Prostate gland (tissue), 2 donors: ENCODE measurements at regions of chr7 and their contacts with region 1.

Region 1: DNA sequence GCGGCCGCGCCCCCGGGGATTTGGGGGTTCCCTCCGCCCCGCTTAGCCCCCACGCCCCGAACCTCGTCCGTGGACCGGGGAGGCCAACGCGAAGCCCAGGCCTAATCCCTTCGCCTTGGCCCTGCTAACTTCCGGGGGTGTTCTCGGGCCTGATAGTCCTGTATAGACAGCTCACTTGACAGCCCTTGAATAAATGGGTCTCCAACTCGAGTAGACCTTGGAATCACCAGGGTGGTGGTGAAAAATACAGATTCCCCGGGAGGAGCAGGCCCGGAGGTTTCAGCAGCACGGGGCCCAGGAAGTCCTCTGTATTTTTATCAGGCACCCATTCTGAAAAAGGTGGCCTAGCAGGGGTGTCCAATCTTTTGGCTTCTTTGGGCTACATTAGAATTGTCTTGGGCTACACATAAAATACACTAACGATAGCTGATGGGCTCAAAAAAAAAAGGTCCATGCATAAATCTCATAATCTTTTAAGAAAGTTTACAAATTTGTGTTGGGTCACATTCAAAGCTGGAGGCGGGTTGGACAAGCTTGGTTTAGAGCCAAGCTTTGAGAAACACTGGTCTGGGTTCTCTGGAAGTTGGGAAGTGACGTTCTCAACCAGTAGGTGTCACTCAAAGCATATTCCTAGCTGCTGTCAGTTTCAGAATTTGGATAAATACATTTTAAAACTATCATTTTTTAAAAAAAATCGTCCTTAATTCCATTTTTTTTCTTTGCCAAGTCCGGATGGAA is 221.7 kb downstream of the PHTF2 start:
- DNase-seq: peak; percentile 75
- H3K4me3 ChIP-seq: peak overlapping the region; percentile 48 to 53
- H3K27ac ChIP-seq: peak overlapping the region; percentile 95 to 96
- H3K4me1 ChIP-seq: peaks cover 2% of the 10 kb centered on the region
- H3K27me3 ChIP-seq: no peaks in the 10 kb centered on the region
- CTCF ChIP-seq: peak; percentile 53 to 80 (median 67)
- POLR2A ChIP-seq: no peak

Region 2: DNA sequence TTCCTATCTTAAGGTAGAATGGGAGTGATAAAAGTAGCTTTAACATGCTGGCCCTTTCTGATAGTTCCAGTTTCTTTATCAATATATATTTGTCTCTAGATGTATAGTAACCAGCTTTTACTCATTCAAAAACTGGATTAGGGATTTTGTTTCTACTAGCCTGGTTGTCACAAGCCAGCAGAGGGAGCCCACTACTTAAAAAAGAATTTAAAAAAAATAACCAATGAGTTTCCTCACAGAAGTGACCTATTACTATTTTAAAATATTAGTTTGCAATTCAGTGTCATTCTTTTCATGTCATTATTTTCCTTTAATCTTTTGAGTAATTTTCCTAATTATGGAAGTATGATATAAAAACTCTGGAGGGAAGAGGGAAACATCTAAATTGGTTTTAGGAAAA is 79.7 kb before region 1 on chr7:
- intact Hi-C with region 1: loop called (anchors 10 kb)
- DNase-seq: peak; percentile 12
- H3K4me3 ChIP-seq: no peak overlapping the region
- H3K27ac ChIP-seq: no peak overlapping the region
- H3K4me1 ChIP-seq: no peaks in the 10 kb centered on the region
- H3K27me3 ChIP-seq: no peaks in the 10 kb centered on the region
- CTCF ChIP-seq: peak in 3 of 4 experiments; percentile 40 to 66 (median 61)
- POLR2A ChIP-seq: no peak

Region 3: DNA sequence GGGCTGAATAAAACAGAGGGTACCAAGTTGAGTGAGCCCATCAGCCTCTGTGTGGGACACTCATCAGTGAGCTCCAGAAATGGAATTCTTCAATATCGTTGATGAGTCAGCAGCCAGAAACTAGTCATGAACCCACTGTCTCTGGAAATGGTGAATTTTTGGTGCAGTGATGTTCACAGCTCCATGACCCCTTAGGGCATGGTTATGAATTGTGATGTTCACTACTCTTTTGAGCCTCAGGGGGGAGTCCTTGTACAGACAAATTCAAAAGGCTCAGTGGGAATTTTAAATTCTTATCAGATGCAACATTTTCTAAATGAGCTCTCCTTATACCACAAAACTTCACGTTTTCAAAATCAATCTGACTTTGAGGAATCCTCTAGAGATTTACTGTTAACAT is 114.0 kb after region 1 on chr7:
- intact Hi-C with region 1: loop called (anchors 10 kb)
- DNase-seq: no peak
- H3K4me3 ChIP-seq: no peak overlapping the region
- H3K27ac ChIP-seq: no peak overlapping the region
- H3K4me1 ChIP-seq: no peaks in the 10 kb centered on the region
- H3K27me3 ChIP-seq: no peaks in the 10 kb centered on the region
- CTCF ChIP-seq: peak in 2 of 4 experiments; percentile 27 to 47
- POLR2A ChIP-seq: no peak

Region 4: GRCh38 chr7:78226059-78226719 is 205.9 kb after region 1 on chr7:
- intact Hi-C with region 1: loop called (anchors 10 kb)
- DNase-seq: no peak
- H3K4me3 ChIP-seq: no peak overlapping the region
- H3K27ac ChIP-seq: no peak overlapping the region
- H3K4me1 ChIP-seq: no peaks in the 10 kb centered on the region
- H3K27me3 ChIP-seq: no peaks in the 10 kb centered on the region
- CTCF ChIP-seq: peak in 1 of 4 experiments; percentile 21
- POLR2A ChIP-seq: no peak

Region 5: DNA sequence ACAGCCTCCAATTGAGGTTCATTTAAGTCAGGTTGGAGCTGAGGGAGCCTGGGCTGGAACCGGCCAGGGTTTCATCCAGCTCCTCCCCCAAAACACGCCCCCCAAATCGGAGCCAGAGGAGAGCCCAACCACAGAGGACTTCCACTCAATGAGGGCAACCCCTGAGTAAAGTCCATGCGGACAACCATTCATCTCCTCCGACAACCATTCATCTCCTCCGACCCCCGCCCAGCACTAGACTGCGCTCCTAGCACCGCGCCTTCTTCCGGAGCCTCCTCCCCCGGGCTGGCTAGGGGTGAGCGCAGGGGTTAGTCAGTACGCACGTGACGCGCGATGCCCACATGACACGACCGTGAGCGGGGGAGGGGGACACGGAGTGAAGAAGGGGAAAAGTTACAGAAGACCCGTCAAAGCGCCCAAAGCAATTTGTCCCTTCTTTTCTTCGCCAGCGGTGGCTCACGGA is 1431.8 kb after region 1 on chr7:
- intact Hi-C with region 1: loop called (anchors 5 kb)
- DNase-seq: peak; percentile 75
- H3K4me3 ChIP-seq: peak overlapping the region; percentile 52 to 58
- H3K27ac ChIP-seq: peak overlapping the region; percentile 89 to 90
- H3K4me1 ChIP-seq: no peaks in the 10 kb centered on the region
- H3K27me3 ChIP-seq: no peaks in the 10 kb centered on the region
- CTCF ChIP-seq: no peak
- POLR2A ChIP-seq: peak; percentile 73